Natural killer cell (primary cell): ENCODE measurements at regions of chr11 and their contacts with region 1.

Region 1: GRCh38 chr11:74948898-74949747 is at the starts of genes SPCS2 and XRRA1:
- DNase-seq: peak; percentile 96 to 98
- ATAC-seq: peak; percentile 96 to 99 (median 97)
- H3K4me3 ChIP-seq: peak within 1 kb of the TSS; percentile 88
- H3K4me3 Mint-ChIP-seq: peak within 1 kb of the TSS; percentile 99
- H3K27ac ChIP-seq: peak within 1 kb of the TSS; percentile 95
- H3K27ac Mint-ChIP-seq: peak within 1 kb of the TSS; percentile 97
- H3K4me1 ChIP-seq: peaks cover 24% of the 10 kb centered on the region
- H3K4me1 Mint-ChIP-seq: peaks cover 52 to 55% of the 10 kb centered on the region in 2 donors
- H3K27me3 ChIP-seq: no peaks in the 10 kb centered on the region
- H3K27me3 Mint-ChIP-seq: no peaks in the 10 kb centered on the region
- CTCF ChIP-seq: no peak
- total RNA-seq, gene SPCS2: 76.9 to 117 (median 106) TPM
- total RNA-seq, gene XRRA1: 12.7 to 14.3 (median 14.3) TPM

Region 2: GRCh38 chr11:74988541-74989260 is 39.6 kb after region 1 on chr11 and contains the start of gene NEU3:
- intact Hi-C with region 1: loop called (anchors 1 kb)
- DNase-seq: peak; percentile 71 to 89
- ATAC-seq: peak; percentile 96 to 98 (median 97)
- H3K4me3 ChIP-seq: peak within 1 kb of the TSS; percentile 86
- H3K4me3 Mint-ChIP-seq: peak within 1 kb of the TSS; percentile 89
- H3K27ac ChIP-seq: peak within 1 kb of the TSS; percentile 70
- H3K27ac Mint-ChIP-seq: peak within 1 kb of the TSS; percentile 76 to 91
- H3K4me1 ChIP-seq: peaks cover 16% of the 10 kb centered on the region
- H3K4me1 Mint-ChIP-seq: peaks cover 15 to 18% of the 10 kb centered on the region in 2 donors
- H3K27me3 ChIP-seq: no peaks in the 10 kb centered on the region
- H3K27me3 Mint-ChIP-seq: no peaks in the 10 kb centered on the region
- CTCF ChIP-seq: no peak
- total RNA-seq, gene NEU3: 16.9 to 24.3 (median 17.5) TPM